ENCODE measurements at regions of chr1 and their contacts with region 1.

Region 1: GRCh38 chr1:224513787-224514209 is 79.2 kb upstream of the WDR26 start:
- DNase-seq: peak; percentile 91
- ATAC-seq: peak; percentile 99
- H3K4me3 Mint-ChIP-seq: no peak overlapping the region
- H3K27ac Mint-ChIP-seq: no peak overlapping the region
- H3K4me1 Mint-ChIP-seq: peaks cover 6% of the 10 kb centered on the region
- H3K27me3 Mint-ChIP-seq: no peaks in the 10 kb centered on the region
- CTCF ChIP-seq: peak; percentile 96

Region 2: DNA sequence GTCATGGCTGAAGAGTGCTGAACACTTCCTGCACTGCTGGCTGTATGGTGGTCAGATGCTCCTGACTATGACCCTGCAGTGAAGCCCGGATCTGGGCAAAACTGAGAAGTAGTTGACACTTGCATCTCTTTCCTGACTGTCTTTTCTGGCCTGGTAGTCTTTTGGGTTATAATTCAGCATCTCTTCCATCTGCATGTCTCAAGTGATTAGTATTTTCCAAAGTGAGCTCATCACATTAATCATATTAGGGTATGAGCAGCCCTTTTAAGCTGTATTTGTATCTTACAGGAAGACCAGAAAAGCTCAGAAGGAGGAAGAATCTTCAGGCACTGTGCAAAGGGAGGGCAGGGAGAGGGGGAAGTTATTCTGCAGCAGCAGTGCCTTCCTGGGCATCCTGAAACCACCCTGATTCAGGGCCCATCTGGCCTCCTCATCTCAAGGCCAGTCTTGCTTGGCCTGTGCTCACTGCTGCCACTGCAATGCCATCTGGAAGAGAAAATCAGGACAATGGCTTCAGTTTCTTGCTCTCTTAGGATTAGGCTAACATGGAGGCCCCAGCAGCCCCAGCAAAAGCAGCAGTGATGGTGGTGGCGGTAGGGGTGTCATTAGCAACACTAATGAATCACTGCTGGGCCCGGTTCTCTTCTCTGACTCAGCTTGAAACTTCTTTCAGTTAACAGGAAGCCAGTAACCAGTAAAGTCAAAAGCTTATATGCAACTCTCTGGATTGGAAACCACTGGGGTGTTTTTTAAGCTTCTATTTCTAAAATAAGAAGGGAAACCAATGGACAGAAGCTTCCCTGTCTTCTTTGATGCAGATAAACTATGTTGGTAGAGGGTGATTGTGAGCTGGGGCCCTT is 15.9 kb before region 1 on chr1:
- CTCF ChIA-PET with region 1: interaction called, 41 read pairs
- POLR2A ChIA-PET with region 1: interaction called, 3 read pairs
- intact Hi-C with region 1: no loop called
- DNase-seq: peak; percentile 91
- ATAC-seq: peak; percentile 97
- H3K4me3 Mint-ChIP-seq: peak overlapping the region; percentile 46
- H3K27ac Mint-ChIP-seq: peak overlapping the region; percentile 97
- H3K4me1 Mint-ChIP-seq: peaks cover 44% of the 10 kb centered on the region
- H3K27me3 Mint-ChIP-seq: no peaks in the 10 kb centered on the region
- CTCF ChIP-seq: no peak

Region 3: DNA sequence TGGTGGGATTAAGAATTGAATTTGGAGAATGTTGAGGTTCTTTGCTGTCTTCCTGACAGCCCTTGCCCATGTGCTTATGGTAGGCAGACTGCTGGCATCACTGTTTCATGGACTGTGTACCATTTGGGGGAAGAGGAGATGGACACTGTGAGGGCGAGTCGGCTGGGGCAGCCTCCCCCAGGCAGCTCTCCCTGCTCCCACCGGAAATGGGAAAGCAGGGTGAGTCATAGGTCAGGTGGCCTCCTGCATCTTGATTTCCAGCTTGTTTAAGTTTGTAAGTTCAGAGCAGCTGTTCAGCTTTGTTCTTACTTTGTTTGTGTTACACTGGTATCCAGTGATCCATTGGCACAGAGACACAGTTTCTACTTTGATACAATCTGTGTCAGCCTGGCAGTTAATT is 15.1 kb after region 1 on chr1:
- CTCF ChIA-PET with region 1: interaction called, 18 read pairs
- POLR2A ChIA-PET with region 1: interaction called, 3 read pairs
- intact Hi-C with region 1: no loop called
- DNase-seq: no peak
- ATAC-seq: no peak
- H3K4me3 Mint-ChIP-seq: no peak overlapping the region
- H3K27ac Mint-ChIP-seq: no peak overlapping the region
- H3K4me1 Mint-ChIP-seq: no peaks in the 10 kb centered on the region
- H3K27me3 Mint-ChIP-seq: peaks cover 1% of the 10 kb centered on the region
- CTCF ChIP-seq: no peak

Region 4: GRCh38 chr1:224615861-224616755 is 102.3 kb after region 1 on chr1 and contains the start of gene CNIH3:
- CTCF ChIA-PET with region 1: interaction called, 11 read pairs
- POLR2A ChIA-PET with region 1: no interaction called
- intact Hi-C with region 1: loop called (anchors 10 kb)
- DNase-seq: peak; percentile 64
- ATAC-seq: peak; percentile 83
- H3K4me3 Mint-ChIP-seq: peak within 1 kb of the TSS; percentile 53
- H3K27ac Mint-ChIP-seq: no peak within 1 kb of the TSS
- H3K4me1 Mint-ChIP-seq: peaks cover 30% of the 10 kb centered on the region
- H3K27me3 Mint-ChIP-seq: peaks cover 50% of the 10 kb centered on the region
- CTCF ChIP-seq: no peak
- total RNA-seq, gene CNIH3: 1.6 to 2.1 TPM

Region 5: GRCh38 chr1:224700915-224701531 is 187.2 kb after region 1 on chr1:
- CTCF ChIA-PET with region 1: interaction called, 10 read pairs
- POLR2A ChIA-PET with region 1: no interaction called
- intact Hi-C with region 1: no loop called
- DNase-seq: peak; percentile 32
- ATAC-seq: peak; percentile 56
- H3K4me3 Mint-ChIP-seq: no peak overlapping the region
- H3K27ac Mint-ChIP-seq: no peak overlapping the region
- H3K4me1 Mint-ChIP-seq: no peaks in the 10 kb centered on the region
- H3K27me3 Mint-ChIP-seq: no peaks in the 10 kb centered on the region
- CTCF ChIP-seq: peak; percentile 53

Region 6: DNA sequence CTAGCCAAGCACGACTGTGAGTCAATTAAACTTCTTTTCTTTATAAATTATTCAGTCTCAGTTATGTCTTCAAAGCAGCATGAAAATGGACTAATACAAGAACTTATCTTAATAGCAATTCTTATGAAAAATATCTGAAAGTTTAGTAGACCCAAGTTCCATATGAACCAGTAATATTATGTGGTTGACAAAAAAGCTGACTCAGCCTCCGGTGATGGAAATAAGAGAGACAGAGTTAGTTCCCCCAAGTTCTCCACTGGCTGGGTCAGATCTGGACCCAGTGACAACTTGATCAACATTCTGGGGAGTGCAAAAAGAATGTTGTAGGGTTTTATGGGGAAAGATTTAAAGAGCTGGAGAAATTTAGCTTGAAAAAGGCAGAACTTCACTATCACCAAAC is 343.2 kb after region 1 on chr1:
- CTCF ChIA-PET with region 1: interaction called, 58 read pairs
- POLR2A ChIA-PET with region 1: no interaction called
- intact Hi-C with region 1: loop called (anchors 5 kb)
- DNase-seq: no peak
- ATAC-seq: no peak
- H3K4me3 Mint-ChIP-seq: no peak overlapping the region
- H3K27ac Mint-ChIP-seq: no peak overlapping the region
- H3K4me1 Mint-ChIP-seq: no peaks in the 10 kb centered on the region
- H3K27me3 Mint-ChIP-seq: peaks cover 10% of the 10 kb centered on the region
- CTCF ChIP-seq: no peak